Lower leg skin (tissue), 4 donors: ENCODE measurements at regions of chr10 and their contacts with region 1.

Region 1: DNA sequence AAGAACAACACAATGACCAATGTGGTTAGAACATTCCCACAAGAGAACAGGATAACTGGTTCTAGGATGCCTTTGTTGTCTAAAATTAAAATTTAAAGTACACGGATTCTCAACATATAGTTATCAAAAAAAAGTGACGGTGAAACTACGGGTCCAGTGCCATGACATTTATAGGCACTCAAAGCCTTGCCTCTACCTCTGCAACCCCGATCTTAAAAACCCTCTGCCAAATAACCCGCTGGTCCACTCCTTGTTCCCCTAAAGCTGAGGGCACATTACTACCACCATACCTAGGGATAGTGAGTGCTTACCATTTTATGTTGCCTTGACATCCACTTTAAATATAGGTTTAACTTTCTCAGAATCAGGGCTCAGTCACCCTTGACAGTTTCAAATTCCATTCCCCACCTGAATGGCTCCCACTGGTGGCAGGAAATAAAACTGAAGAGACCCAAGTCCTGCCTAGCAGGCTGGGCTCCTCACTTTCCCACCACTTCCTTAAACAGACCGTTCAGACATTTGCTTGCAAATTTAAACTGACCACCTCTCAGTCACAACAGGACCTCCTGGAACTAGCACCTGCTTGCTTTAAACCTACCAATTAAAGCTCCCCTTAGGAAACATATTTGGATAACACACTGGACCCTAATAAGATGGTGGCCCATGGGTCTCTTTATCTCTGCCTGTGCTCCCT is 169.9 kb upstream of the ASAH2 start:
- DNase-seq: peak in 1 of 2 donors; percentile 33
- H3K4me3 ChIP-seq: no peak overlapping the region
- CTCF ChIP-seq: no peak
- POLR2A ChIP-seq: no peak

Region 2: GRCh38 chr10:50624866-50625692 is 203.9 kb after region 1 on chr10:
- intact Hi-C with region 1: loop called (anchors 10 kb)
- DNase-seq: peak; percentile 59 to 91
- H3K4me3 ChIP-seq: peak overlapping the region; percentile 78
- CTCF ChIP-seq: peak in 1 of 3 donors; percentile 43
- POLR2A ChIP-seq: no peak